ENCODE measurements at regions of chr17 and their contacts with region 1.

Region 1: DNA sequence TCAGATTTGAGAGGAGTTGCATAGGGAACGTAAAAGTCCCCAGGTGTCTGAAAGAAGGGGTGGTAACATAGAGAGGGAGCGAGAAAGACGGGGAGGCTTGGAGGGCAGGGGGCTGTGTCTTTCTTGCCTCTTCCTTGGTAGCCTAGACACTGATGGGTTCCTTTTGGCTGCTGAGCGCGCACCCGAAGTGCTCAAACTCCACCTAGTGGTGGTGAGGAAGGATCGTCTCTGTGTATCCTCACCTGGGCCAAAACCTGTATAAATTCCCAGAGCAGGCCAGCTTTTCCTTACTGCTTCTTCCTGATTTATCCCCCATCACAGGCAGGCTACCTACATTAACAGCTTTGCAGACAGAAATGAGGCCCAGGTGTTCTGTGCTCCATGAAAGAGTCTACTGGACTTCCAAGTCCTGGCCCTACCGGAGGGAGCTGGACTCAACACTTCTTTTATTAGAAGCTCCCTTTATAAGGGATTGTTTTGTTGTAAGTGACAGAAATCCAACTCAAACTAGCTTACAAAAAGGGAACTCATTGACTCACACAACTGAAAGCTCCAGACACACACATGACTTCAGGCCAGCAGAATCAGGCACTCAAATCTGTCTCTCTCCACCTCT is 5.5 kb upstream of the SLC25A35 start:
- DNase-seq: peak; percentile 39 to 87 (median 58)
- ATAC-seq: peak; percentile 96
- H3K4me3 ChIP-seq: no peak overlapping the region
- H3K4me3 Mint-ChIP-seq: peak overlapping the region; percentile 49
- H3K27ac ChIP-seq: no peak overlapping the region
- H3K27ac Mint-ChIP-seq: peak overlapping the region; percentile 8
- H3K4me1 ChIP-seq: peaks cover 10% of the 10 kb centered on the region
- H3K4me1 Mint-ChIP-seq: peaks cover 13% of the 10 kb centered on the region
- H3K27me3 ChIP-seq: no peaks in the 10 kb centered on the region
- H3K27me3 Mint-ChIP-seq: no peaks in the 10 kb centered on the region
- CTCF ChIP-seq: peak; percentile 81

Region 2: GRCh38 chr17:8079291-8080207 is 221.2 kb before region 1 on chr17:
- CTCF ChIA-PET with region 1: interaction called, 3 read pairs
- POLR2A ChIA-PET with region 1: no interaction called
- intact Hi-C with region 1: loop called in 1 of 2 experiments (anchors 1 kb)
- DNase-seq: peak; percentile 66 to 92 (median 76)
- ATAC-seq: peak; percentile 80
- H3K4me3 ChIP-seq: peak overlapping the region; percentile 77
- H3K4me3 Mint-ChIP-seq: peak overlapping the region; percentile 92
- H3K27ac ChIP-seq: peak overlapping the region; percentile 52 to 70
- H3K27ac Mint-ChIP-seq: peak overlapping the region; percentile 76
- H3K4me1 ChIP-seq: peaks cover 20% of the 10 kb centered on the region
- H3K4me1 Mint-ChIP-seq: peaks cover 17% of the 10 kb centered on the region
- H3K27me3 ChIP-seq: peaks cover 4 to 6% of the 10 kb centered on the region in 2 experiments
- H3K27me3 Mint-ChIP-seq: peaks cover 7% of the 10 kb centered on the region
- CTCF ChIP-seq: peak; percentile 82

Region 3: GRCh38 chr17:8184006-8184670 is 116.6 kb before region 1 on chr17:
- CTCF ChIA-PET with region 1: no interaction called
- POLR2A ChIA-PET with region 1: interaction called, 13 read pairs
- intact Hi-C with region 1: loop called in 1 of 2 experiments (anchors 5 kb)
- DNase-seq: peak in 1 of 14 experiments; percentile 14
- ATAC-seq: no peak
- H3K4me3 ChIP-seq: no peak overlapping the region
- H3K4me3 Mint-ChIP-seq: peak overlapping the region; percentile 71
- H3K27ac ChIP-seq: no peak overlapping the region
- H3K27ac Mint-ChIP-seq: peak overlapping the region; percentile 67
- H3K4me1 ChIP-seq: peaks cover 36% of the 10 kb centered on the region
- H3K4me1 Mint-ChIP-seq: peaks cover 6% of the 10 kb centered on the region
- H3K27me3 ChIP-seq: no peaks in the 10 kb centered on the region
- H3K27me3 Mint-ChIP-seq: no peaks in the 10 kb centered on the region
- CTCF ChIP-seq: no peak

Region 4: DNA sequence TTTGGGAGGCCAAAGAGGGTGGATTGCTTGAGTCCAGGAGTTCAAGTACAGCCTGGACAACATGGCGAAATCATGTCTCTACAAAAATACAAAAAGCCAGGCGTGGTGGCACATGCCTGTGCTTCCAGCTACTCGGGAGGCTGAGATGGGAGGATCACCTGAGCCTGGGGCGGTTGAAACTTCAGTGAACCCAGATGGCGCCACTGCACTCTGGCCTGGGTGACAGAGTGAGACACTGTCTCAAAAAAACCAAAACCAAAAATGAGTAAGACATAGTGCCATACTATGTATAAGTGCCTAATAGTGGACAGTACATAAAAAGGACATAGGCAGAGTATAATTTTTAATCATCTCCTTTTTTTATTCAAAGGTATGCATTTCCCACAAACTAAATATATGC is 56.9 kb before region 1 on chr17:
- CTCF ChIA-PET with region 1: interaction called, 13 read pairs
- POLR2A ChIA-PET with region 1: interaction called, 117 read pairs
- intact Hi-C with region 1: loop called (anchors 1 to 2 kb)
- DNase-seq: peak in 7 of 14 experiments; percentile 22 to 60 (median 37)
- ATAC-seq: no peak
- H3K4me3 ChIP-seq: no peak overlapping the region
- H3K4me3 Mint-ChIP-seq: peak overlapping the region; percentile 83
- H3K27ac ChIP-seq: peak overlapping the region in 1 of 2 donors; percentile 36
- H3K27ac Mint-ChIP-seq: peak overlapping the region; percentile 100
- H3K4me1 ChIP-seq: peaks cover 57% of the 10 kb centered on the region
- H3K4me1 Mint-ChIP-seq: peaks cover 66% of the 10 kb centered on the region
- H3K27me3 ChIP-seq: no peaks in the 10 kb centered on the region
- H3K27me3 Mint-ChIP-seq: peaks cover 3% of the 10 kb centered on the region
- CTCF ChIP-seq: peak; percentile 24

Region 5: GRCh38 chr17:8314797-8315763 is 14.3 kb after region 1 on chr17:
- CTCF ChIA-PET with region 1: no interaction called
- POLR2A ChIA-PET with region 1: no interaction called
- intact Hi-C with region 1: no loop called
- DNase-seq: no peak
- ATAC-seq: no peak
- H3K4me3 ChIP-seq: no peak overlapping the region
- H3K4me3 Mint-ChIP-seq: no peak overlapping the region
- H3K27ac ChIP-seq: no peak overlapping the region
- H3K27ac Mint-ChIP-seq: no peak overlapping the region
- H3K4me1 ChIP-seq: peaks cover 2% of the 10 kb centered on the region
- H3K4me1 Mint-ChIP-seq: no peaks in the 10 kb centered on the region
- H3K27me3 ChIP-seq: peaks cover 5 to 7% of the 10 kb centered on the region in 2 experiments
- H3K27me3 Mint-ChIP-seq: peaks cover 31% of the 10 kb centered on the region
- CTCF ChIP-seq: no peak

Measured in CD4-positive, alpha-beta T cell (primary cell).